ENCODE measurements at regions of chr5 and their contacts with region 1.

Region 1: DNA sequence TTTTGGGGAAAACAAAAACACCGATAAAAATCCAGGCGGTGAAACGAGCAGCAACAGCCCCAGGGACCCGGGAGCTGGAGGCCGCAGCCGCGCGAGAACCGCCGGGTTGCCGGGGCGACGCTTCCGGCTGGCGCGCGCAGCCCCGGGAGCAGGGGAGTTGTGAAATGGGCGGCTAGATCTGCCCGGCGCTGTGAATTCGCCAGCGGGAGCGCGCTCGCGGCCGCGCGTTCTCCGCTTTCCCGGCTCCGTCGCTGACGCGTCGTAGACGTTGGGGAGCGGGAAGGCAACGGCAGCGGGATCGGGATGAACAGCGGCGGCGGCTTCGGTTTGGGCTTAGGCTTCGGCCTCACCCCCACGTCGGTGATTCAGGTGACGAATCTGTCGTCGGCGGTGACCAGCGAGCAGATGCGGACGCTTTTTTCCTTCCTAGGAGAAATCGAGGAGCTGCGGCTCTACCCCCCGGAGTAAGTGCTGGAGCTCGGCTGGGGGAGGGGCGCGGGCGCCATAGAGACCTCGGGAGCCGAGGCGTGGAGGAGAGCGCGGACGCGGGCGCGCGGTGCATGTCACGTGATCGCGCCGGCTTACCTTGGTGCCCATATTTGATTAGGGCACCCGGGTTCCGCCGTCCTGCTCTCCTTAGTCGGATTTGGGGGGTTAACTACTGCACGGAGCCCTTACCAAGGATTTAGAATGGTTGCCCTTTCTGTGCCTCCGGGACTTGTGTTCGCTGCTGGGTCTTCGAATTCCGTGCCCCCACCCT is at the start of gene SREK1:
- DNase-seq: peak; percentile 95
- total RNA-seq, gene SREK1: 50.7 TPM

Region 2: GRCh38 chr5:65721720-65722574 is 422.3 kb before region 1 on chr5 and contains the starts of genes NLN and SGTB:
- intact Hi-C with region 1: loop called (anchors 10 kb)
- DNase-seq: peak; percentile 96
- total RNA-seq, gene NLN: 17.2 TPM
- total RNA-seq, gene SGTB: 9.5 TPM

Region 3: DNA sequence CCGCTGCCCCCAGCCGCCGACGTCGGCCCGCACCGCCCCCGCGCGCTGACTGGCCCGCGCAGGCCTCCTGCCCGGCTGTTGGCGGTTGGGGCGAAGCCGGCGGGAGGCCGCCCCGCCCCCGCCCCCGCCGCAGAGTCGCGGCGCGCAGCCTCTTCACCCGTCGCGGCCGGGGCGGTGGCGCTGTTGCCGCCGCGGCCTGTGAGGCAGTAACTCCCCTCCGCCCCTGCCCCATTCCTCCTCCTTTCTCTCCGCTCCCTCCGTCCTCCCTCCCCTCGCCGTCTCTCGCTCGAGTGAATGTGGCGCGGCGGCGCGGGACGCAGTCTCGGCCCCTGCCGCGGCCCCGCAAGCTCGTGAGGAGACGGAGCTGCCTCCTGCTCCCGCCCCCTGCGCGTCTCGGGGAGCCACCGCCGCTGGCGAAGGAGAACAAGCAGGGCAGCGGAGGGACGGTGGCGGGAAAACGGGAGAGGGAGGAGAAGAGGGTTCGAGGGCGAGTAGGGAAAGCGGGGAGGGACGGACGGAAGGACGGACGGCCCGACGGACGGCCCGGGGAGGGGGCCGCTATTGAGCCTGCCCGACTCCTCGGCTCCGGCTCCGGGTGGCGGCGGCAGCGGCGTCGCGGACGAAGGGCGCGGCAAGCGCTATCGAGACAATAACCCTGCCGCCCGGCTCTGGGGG is 218.5 kb before region 1 on chr5:
- intact Hi-C with region 1: loop called (anchors 1 kb)
- DNase-seq: peak; percentile 90

Region 4: GRCh38 chr5:66041627-66042026 is 102.6 kb before region 1 on chr5:
- intact Hi-C with region 1: no loop called
- DNase-seq: no peak